Heart left ventricle (tissue), 16 donors: ENCODE measurements at regions of chr7 and their contacts with region 1.

Region 1: DNA sequence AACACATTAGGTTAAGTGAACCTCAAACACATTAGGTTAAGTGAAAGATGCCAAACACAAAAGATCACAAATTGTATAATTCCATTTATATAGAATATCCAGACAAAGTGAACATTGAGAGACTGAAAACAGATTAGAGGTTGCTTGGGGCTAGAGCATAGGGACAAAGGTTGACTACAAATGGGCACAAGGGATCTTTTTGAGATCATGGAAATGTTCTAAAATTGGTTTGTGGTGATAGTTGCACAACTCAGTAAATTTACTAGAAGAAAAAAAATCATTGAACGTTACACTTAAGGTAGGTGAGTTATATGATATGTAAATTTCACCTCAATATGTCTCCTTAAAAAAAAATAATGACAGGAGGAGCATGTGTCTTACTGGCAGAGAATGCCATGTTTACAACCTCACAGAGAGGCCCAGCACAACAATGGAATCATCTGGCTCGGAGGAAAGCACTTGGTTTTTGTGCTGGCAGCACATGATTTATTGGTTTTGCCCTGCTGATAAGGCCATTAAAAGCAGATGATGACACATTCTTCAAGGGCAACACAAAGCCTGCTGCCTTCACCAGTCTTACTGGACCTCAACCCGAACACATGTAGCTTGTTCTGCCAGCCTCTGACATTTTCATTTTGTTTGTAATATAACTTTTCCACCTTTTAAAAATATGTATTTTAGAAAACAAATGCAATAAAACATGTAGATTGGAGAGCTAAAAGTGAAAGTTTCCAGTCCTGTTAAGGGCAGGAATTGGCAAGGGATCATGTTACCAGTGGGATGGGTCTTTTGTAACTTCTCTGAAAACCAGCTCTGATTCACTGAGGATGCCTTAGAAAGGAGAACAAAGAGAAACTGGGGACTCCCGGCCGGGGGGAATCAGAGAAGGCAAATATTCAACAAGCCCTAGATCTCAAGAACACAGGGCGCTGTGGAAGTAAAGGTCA is 11.9 kb upstream of the LMOD2 start:
- DNase-seq: peak in 3 of 5 donors; percentile 40 to 43 (median 42)
- ATAC-seq: peak; percentile 72 to 75 (median 72)
- H3K4me3 ChIP-seq: peak overlapping the region in 9 of 12 donors; percentile 8 to 41 (median 33)
- H3K27ac ChIP-seq: peak overlapping the region; percentile 34 to 94 (median 84)
- H3K4me1 ChIP-seq: peaks cover 0 to 62% (median 24%) of the 10 kb centered on the region in 12 donors
- H3K27me3 ChIP-seq: no peaks in the 10 kb centered on the region
- CTCF ChIP-seq: no peak
- POLR2A ChIP-seq: peak in 1 of 2 donors; percentile 66

Region 2: DNA sequence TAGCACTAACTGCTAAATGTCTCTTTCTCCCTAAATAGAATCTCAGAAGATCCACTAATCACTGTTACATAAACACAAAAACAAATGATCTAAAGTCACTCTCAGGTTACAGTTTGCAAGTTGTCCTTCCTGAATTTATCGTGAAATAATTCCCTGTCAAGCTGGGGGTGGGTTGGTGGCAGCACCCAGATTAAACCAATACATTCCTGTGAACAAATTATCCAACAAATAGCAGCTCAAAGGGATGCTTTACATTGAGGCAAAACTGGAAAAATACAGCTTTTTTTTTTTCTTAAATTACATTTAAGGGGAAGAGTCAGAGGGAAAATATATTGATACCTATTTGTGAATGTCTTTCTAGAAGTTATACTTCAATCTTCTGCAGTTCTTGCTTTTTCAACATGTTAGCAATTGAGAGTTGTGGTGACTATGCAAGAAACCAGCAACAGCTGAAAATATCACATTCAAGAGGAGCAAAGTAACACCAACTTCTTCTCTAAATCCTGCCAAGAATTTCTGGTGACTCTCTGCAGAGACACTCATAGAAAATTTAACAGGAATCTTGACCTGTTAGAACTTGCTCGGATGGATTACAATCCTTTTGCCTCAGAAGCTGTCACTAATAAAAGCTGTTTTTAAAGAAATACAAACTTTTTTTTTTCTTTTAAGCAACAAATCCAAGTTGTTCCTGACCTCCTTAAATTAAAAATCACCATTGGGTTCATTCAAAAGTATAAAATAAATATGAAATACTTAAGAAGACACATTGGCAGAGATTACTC is 30.8 kb after region 1 on chr7:
- intact Hi-C with region 1: loop called in 2 of 10 experiments (anchors 5 kb)
- DNase-seq: no peak
- ATAC-seq: no peak
- H3K4me3 ChIP-seq: no peak overlapping the region
- H3K27ac ChIP-seq: peak overlapping the region in 7 of 12 donors; percentile 6 to 61 (median 37)
- H3K4me1 ChIP-seq: peaks cover 0 to 54% (median 15%) of the 10 kb centered on the region in 12 donors
- H3K27me3 ChIP-seq: no peaks in the 10 kb centered on the region
- CTCF ChIP-seq: no peak
- POLR2A ChIP-seq: no peak